ENCODE measurements at regions of chr4 and their contacts with region 1.

Region 1: DNA sequence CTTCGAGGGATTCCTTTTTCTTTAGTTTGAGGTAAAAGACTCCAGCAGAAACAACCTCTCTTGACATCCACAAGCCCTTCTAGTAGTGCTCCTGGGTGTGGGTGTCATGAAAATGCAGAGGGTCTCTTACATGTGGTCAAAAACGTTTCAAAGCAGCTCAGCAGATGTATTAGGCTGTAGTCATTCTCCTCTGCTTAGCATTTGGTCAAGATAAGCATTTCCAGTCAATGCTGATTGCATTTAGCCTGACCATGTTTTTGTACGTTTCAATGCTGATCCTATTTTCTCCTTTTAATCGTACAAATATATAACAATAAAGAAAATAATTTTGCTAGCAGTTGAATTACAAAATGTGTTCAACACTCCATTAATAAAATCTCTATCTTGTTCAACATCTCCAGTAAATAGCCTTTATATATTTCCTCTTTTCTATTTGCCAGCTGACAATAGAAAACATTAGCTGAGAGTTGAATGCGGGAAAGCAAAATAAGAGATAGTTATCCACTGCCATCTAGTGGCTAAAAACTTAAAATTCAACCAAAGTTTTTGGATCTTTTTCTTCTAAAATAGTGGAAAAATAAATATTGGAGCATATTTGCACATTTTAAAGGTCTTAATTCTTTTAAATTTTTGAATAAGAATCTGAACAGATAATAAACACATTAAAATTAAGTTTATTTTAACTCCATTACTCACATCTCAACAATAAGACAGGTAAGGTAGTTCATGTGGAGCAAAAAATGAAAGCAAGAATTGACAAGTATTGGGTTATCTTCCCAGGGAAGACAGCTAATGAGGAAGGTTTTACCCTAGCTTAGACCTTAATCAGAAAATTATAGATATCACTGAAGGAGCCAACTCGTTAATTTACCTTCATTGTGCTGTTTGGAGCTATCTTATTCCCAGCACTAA is 15.2 kb upstream of the PACRGL start:
- DNase-seq: no peak
- H3K4me3 ChIP-seq: no peak overlapping the region
- H3K27ac ChIP-seq: no peak overlapping the region
- H3K4me1 ChIP-seq: no peaks in the 10 kb centered on the region
- H3K27me3 ChIP-seq: no peaks in the 10 kb centered on the region
- CTCF ChIP-seq: peak; percentile 9 to 68 (median 53)
- POLR2A ChIP-seq: no peak

Region 2: DNA sequence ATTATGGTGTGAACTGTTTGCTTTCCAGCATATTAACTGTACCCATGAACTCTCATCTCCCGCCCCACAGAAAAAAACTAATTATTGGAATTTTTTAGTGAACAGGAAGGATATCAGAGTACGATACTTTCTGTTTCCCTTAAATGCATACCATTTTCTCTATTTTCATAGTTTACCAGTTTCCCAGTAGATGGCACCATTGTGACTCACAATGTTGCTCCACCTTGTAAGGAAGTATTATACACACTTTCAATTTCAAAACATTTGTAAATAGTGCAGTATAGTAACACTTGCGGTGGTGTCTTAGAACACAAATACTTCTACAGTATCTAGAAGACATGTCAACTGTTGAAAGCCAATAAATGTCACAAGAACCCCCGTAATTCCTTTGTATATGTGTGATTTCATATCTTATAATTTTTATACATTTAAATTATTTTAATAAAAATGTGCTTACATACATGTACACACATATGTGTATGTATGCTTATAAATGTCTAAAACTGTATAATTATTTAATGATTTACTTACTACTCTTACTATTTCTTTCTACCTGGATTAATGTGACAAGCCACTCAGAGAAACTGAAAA is 266.2 kb before region 1 on chr4:
- intact Hi-C with region 1: loop called (anchors 10 kb)
- DNase-seq: no peak
- H3K4me3 ChIP-seq: peak overlapping the region; percentile 8 to 23
- H3K27ac ChIP-seq: no peak overlapping the region
- H3K4me1 ChIP-seq: peaks cover 8% of the 10 kb centered on the region
- H3K27me3 ChIP-seq: no peaks in the 10 kb centered on the region
- CTCF ChIP-seq: peak in 1 of 3 experiments; percentile 28
- POLR2A ChIP-seq: no peak

Measured in vagina (tissue), 2 donors.